ENCODE measurements at regions of chr11 and their contacts with region 1.

Region 1: GRCh38 chr11:129279326-129280026 is 87.4 kb upstream of the ARHGAP32 start:
- DNase-seq: peak; percentile 70
- H3K4me3 ChIP-seq: peak overlapping the region; percentile 40 to 64 (median 51)
- H3K27ac ChIP-seq: no peak overlapping the region
- H3K4me1 ChIP-seq: peaks cover 8% of the 10 kb centered on the region
- H3K27me3 ChIP-seq: peaks cover 0 to 2% of the 10 kb centered on the region in 2 experiments
- CTCF ChIP-seq: no peak
- POLR2A ChIP-seq: no peak

Region 2: DNA sequence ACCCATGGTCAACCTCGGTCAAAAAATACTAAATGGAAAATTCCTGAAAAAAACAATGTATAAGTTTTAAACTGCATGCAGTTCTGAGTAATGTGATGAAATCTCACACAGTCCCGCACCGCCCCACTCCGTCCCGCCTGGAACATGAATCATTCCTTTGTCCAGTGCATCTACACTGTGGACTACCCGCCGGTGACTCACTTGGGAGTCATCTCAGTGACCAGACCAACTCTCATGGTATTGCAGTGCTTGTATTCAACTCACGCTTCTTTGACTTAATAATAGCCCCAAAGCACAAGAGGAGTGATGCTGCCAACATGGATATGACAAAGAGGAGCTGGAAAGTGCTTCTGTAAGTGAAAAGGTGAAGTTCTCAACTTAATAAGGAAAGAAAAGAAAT is 136.1 kb before region 1 on chr11:
- CTCF ChIA-PET with region 1: no interaction called
- POLR2A ChIA-PET with region 1: no interaction called
- dilution Hi-C with region 1: no loop called
- intact Hi-C with region 1: loop called (anchors 2 kb)
- DNase-seq: peak; percentile 97
- H3K4me3 ChIP-seq: peak overlapping the region in 1 of 3 experiments; percentile 23
- H3K27ac ChIP-seq: peak overlapping the region; percentile 93
- H3K4me1 ChIP-seq: peaks cover 14% of the 10 kb centered on the region
- H3K27me3 ChIP-seq: no peaks in the 10 kb centered on the region
- CTCF ChIP-seq: no peak
- POLR2A ChIP-seq: no peak

Region 3: DNA sequence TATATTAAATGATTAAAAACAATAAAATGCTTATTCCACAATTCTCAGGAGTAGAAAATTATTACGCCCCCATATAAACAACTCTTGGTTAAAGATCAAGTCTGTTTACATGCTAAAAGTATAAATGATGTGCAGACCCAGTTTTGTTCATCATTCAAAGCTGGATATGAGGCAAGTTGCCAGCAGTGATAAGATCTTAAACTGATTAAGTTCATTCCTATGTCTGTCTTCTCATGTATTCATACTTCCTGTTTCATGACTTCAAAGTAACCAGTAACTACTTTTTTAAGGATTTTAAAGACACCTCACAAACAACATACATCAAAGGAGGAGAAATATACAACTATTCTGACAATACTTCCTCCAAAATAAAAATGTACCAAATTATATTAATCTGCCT is 32.3 kb before region 1 on chr11:
- CTCF ChIA-PET with region 1: no interaction called
- POLR2A ChIA-PET with region 1: no interaction called
- dilution Hi-C with region 1: no loop called
- intact Hi-C with region 1: loop called (anchors 2 kb)
- DNase-seq: peak; percentile 32
- H3K4me3 ChIP-seq: no peak overlapping the region
- H3K27ac ChIP-seq: no peak overlapping the region
- H3K4me1 ChIP-seq: peaks cover 15% of the 10 kb centered on the region
- H3K27me3 ChIP-seq: no peaks in the 10 kb centered on the region
- CTCF ChIP-seq: no peak
- POLR2A ChIP-seq: no peak

Region 4: GRCh38 chr11:129895126-129896041 is 615.9 kb after region 1 on chr11 and contains the start of gene NFRKB:
- CTCF ChIA-PET with region 1: no interaction called
- POLR2A ChIA-PET with region 1: no interaction called
- dilution Hi-C with region 1: no loop called
- intact Hi-C with region 1: loop called (anchors 10 kb)
- DNase-seq: peak; percentile 84
- H3K4me3 ChIP-seq: peak within 1 kb of the TSS; percentile 72 to 95 (median 93)
- H3K27ac ChIP-seq: no peak within 1 kb of the TSS
- H3K4me1 ChIP-seq: peaks cover 9% of the 10 kb centered on the region
- H3K27me3 ChIP-seq: no peaks in the 10 kb centered on the region
- CTCF ChIP-seq: no peak
- POLR2A ChIP-seq: peak; percentile 83
- total RNA-seq, gene NFRKB: 30.1 and 30.6 TPM in 2 replicates